Breast epithelium (tissue), 4 donors: ENCODE measurements at regions of chr1 and their contacts with region 1.

Region 1: GRCh38 chr1:93447516-93448291 is at the start of gene FNBP1L:
- DNase-seq: peak; percentile 79 to 80
- H3K4me3 ChIP-seq: peak within 1 kb of the TSS; percentile 86 to 99 (median 98)
- H3K27ac ChIP-seq: peak within 1 kb of the TSS; percentile 92 to 97
- H3K4me1 ChIP-seq: no peaks in the 10 kb centered on the region
- H3K27me3 ChIP-seq: no peaks in the 10 kb centered on the region
- CTCF ChIP-seq: no peak
- POLR2A ChIP-seq: peak; percentile 10
- total RNA-seq, gene FNBP1L: 33.1 to 117 (median 63.6) TPM

Region 2: DNA sequence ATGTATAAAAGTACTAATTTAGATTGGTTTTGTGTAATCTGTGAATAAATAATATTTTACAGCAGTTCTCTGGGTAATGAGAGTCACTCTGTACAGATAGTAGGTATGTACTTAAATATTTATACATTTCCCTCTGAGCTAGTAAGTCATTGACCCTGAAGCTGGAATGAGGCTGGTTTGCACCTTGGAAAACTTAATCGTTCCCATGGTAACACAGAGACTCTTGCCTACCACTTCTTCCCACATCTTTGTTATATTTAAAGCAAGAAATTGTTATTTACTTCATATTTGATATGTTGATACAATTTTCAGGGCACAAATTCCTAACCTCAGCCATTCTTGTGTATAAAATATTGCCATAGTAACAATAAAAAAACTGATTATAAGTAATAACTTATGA is 115.3 kb before region 1 on chr1:
- intact Hi-C with region 1: no loop called
- DNase-seq: no peak
- H3K4me3 ChIP-seq: no peak overlapping the region
- H3K27ac ChIP-seq: no peak overlapping the region
- H3K4me1 ChIP-seq: no peaks in the 10 kb centered on the region
- H3K27me3 ChIP-seq: no peaks in the 10 kb centered on the region
- CTCF ChIP-seq: no peak
- POLR2A ChIP-seq: no peak

Region 3: DNA sequence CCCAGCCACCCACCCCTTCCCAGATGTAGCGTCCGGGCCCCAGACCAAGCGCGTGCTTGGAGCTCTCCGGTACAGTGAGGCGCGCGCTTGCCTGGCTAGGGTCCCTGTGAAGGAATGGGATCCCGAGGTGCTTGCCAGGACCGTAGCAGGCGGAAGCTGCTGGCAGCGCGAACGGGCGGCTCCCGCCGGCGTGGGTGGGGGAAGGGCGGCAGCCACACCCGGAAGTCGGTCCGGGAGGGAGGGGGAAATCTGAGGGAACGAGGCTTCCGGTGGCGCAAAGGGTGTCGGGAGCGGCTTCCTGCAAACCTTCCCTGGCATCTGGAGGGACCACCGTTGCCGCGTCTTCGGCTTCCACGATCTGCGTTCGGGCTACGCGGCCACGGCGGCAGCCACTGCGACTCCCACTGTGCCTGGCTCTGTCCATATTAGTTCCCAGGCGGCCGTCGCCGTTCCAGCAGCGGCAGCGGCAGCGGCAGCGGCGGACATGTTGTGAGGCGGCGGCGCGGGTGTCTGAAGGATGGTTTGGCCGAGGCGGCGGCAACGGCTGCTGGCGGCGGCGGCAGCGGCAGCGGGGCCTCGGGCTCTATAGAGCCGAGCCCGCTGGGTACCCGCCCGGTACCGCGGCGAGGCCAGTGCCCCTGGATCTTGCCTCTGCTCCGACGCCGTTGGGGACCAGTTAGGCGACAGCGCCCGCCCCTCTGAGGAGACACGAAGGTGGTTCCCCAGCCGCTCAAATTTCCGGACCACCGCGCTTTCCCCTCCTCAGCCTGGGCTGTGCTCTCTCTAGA is 101.9 kb before region 1 on chr1 and contains the start of gene DR1:
- intact Hi-C with region 1: loop called (anchors 10 kb)
- DNase-seq: peak; percentile 87 to 91
- H3K4me3 ChIP-seq: peak within 1 kb of the TSS; percentile 87 to 94 (median 92)
- H3K27ac ChIP-seq: peak within 1 kb of the TSS; percentile 93 to 97
- H3K4me1 ChIP-seq: peaks cover 0 to 3% of the 10 kb centered on the region in 2 donors
- H3K27me3 ChIP-seq: no peaks in the 10 kb centered on the region
- CTCF ChIP-seq: no peak
- POLR2A ChIP-seq: peak; percentile 92
- total RNA-seq, gene DR1: 23.6 to 33.1 (median 31.0) TPM